ENCODE measurements at regions of chr3 and their contacts with region 1.

Region 1: DNA sequence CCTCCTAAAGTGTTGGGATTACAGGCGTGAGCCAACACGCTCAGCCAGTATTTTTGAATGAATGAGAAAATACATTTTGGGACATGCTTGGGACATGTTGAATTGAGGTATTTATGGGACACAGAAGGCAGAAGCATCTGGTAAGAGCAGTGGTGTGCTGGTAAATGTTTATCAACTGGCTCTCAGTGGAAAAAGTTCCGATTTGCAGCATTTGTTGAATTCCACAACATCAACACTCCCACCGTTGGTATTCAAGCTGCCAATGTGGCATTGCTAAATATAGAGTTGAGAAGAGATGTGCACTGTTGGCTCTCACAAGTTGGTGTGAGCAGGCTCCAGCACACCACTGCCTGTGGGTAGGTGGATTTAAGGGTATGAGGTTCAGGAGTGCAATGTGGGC is 35.8 kb upstream of the LRRFIP2 start:
- DNase-seq: no peak
- ATAC-seq: no peak
- H3K4me3 ChIP-seq: no peak overlapping the region
- H3K27ac ChIP-seq: no peak overlapping the region
- H3K4me1 ChIP-seq: peaks cover 0 to 10% of the 10 kb centered on the region in 2 experiments; a peak in 2 of 4 replicates
- H3K27me3 ChIP-seq: no peaks in the 10 kb centered on the region
- CTCF ChIP-seq: no peak
- POLR2A ChIP-seq: no peak
- RAD21 ChIP-seq: no peak

Region 2: GRCh38 chr3:36729204-36730056 is 480.8 kb before region 1 on chr3:
- CTCF ChIA-PET with region 1: no interaction called
- POLR2A ChIA-PET with region 1: no interaction called
- RAD21 ChIA-PET with region 1: no interaction called
- intact Hi-C with region 1: loop called (anchors 5 kb)
- DNase-seq: peak; percentile 39
- ATAC-seq: peak; percentile 83
- H3K4me3 ChIP-seq: no peak overlapping the region
- H3K27ac ChIP-seq: no peak overlapping the region
- H3K4me1 ChIP-seq: no peaks in the 10 kb centered on the region; a peak in 1 of 4 replicates
- H3K27me3 ChIP-seq: peaks cover 9% of the 10 kb centered on the region; the same call in 1 of the 2 replicates
- CTCF ChIP-seq: peak; percentile 55 to 76 (median 73)
- POLR2A ChIP-seq: no peak
- RAD21 ChIP-seq: peak; percentile 89

Region 3: DNA sequence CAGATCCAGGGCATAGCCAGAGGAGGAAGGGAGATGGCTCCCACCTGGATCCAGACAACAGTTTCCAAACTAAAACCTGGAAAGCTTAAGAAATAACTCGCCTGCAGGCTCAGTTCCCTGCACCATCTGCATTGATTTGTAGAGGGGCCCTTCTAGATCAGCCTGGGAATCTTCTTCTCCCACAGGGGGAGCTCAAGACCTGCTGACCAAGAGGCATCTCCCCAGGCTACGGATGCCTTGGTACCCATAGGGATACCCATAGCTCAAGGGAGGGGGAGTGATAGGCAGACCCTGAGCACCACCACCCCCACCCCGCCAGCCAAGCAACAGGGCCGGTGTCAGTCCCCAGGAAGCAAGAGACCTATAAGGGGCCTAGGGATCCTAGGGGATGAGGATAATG is 417.9 kb before region 1 on chr3:
- CTCF ChIA-PET with region 1: no interaction called
- POLR2A ChIA-PET with region 1: no interaction called
- RAD21 ChIA-PET with region 1: no interaction called
- intact Hi-C with region 1: loop called (anchors 5 kb)
- DNase-seq: peak; percentile 24
- ATAC-seq: peak; percentile 96
- H3K4me3 ChIP-seq: no peak overlapping the region
- H3K27ac ChIP-seq: no peak overlapping the region
- H3K4me1 ChIP-seq: no peaks in the 10 kb centered on the region
- H3K27me3 ChIP-seq: peaks cover 34% of the 10 kb centered on the region
- CTCF ChIP-seq: peak; percentile 55 to 60 (median 59); a peak in 5 of 6 replicates
- POLR2A ChIP-seq: no peak
- RAD21 ChIP-seq: peak; percentile 75

Region 4: GRCh38 chr3:36993326-36994283 is 216.6 kb before region 1 on chr3 and contains the start of gene MLH1:
- CTCF ChIA-PET with region 1: no interaction called
- POLR2A ChIA-PET with region 1: no interaction called
- RAD21 ChIA-PET with region 1: no interaction called
- intact Hi-C with region 1: loop called (anchors 10 kb)
- DNase-seq: peak; percentile 100
- ATAC-seq: peak; percentile 90
- H3K4me3 ChIP-seq: peak within 1 kb of the TSS; percentile 57 to 76
- H3K27ac ChIP-seq: peak within 1 kb of the TSS; percentile 90
- H3K4me1 ChIP-seq: peaks cover 4 to 21% of the 10 kb centered on the region in 2 experiments; a peak in 2 of 4 replicates
- H3K27me3 ChIP-seq: no peaks in the 10 kb centered on the region
- CTCF ChIP-seq: no peak
- POLR2A ChIP-seq: peak; percentile 94
- RAD21 ChIP-seq: no peak
- total RNA-seq, gene MLH1: 9.6 TPM

Region 5: GRCh38 chr3:37024092-37024491 is 186.1 kb before region 1 on chr3:
- CTCF ChIA-PET with region 1: interaction called, 5 read pairs
- POLR2A ChIA-PET with region 1: no interaction called
- RAD21 ChIA-PET with region 1: no interaction called
- intact Hi-C with region 1: loop called (anchors 1 kb)
- DNase-seq: peak; percentile 4
- ATAC-seq: 0 out of 2 replicates have a peak, but pooled peaks have one; percentile 46
- H3K4me3 ChIP-seq: no peak overlapping the region
- H3K27ac ChIP-seq: no peak overlapping the region
- H3K4me1 ChIP-seq: no peaks in the 10 kb centered on the region
- H3K27me3 ChIP-seq: no peaks in the 10 kb centered on the region
- CTCF ChIP-seq: peak; percentile 38 to 42 (median 39); a peak in 4 of 6 replicates
- POLR2A ChIP-seq: no peak
- RAD21 ChIP-seq: peak; percentile 59